ENCODE measurements at regions of chr5 and their contacts with region 1.

Region 1: GRCh38 chr5:38441453-38442246 is 114.8 kb downstream of the LIFR start:
- DNase-seq: peak; percentile 85
- H3K4me3 Mint-ChIP-seq: no peak overlapping the region
- H3K27ac Mint-ChIP-seq: no peak overlapping the region
- H3K4me1 Mint-ChIP-seq: no peaks in the 10 kb centered on the region
- H3K27me3 Mint-ChIP-seq: peaks cover 35% of the 10 kb centered on the region

Region 2: GRCh38 chr5:38373743-38374142 is 67.9 kb before region 1 on chr5:
- CTCF ChIA-PET with region 1: no interaction called
- POLR2A ChIA-PET with region 1: no interaction called
- DNase-seq: no peak
- H3K4me3 Mint-ChIP-seq: no peak overlapping the region
- H3K27ac Mint-ChIP-seq: no peak overlapping the region
- H3K4me1 Mint-ChIP-seq: no peaks in the 10 kb centered on the region
- H3K27me3 Mint-ChIP-seq: peaks cover 5% of the 10 kb centered on the region

Region 3: DNA sequence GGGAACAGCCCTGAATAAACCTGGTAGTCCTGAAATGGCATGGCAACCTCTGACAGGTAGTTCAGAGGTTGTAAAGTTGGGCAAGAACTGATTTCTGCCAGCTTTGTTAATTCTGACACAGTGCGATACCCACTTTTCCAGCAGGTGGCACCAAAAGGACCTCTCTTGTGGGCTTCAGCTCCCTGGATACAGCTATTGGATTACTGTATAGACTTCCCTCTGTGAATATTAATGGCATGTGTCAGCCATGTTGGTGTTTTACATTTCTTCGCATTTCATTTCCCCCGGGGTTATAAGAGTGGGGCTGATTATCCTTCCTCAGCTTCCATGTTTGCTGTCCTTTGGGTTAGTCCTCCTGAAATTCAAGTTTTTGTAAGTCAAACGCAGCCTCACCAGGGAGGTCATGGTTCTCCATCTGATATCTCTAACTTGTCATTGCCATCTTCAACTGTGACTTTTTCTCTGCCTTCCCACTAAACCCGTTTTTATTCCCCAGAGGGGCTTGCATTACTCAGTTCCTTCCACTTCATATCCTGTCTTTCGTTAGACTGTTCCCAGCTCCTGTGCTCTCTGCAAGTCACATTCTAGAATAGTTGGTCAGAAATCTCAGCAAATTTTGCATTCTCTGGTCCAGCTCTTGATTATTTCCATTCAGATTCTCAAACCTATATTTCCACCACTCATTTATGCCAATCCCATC is 20.8 kb before region 1 on chr5:
- CTCF ChIA-PET with region 1: interaction called, 18 read pairs
- POLR2A ChIA-PET with region 1: no interaction called
- DNase-seq: peak; percentile 41
- H3K4me3 Mint-ChIP-seq: no peak overlapping the region
- H3K27ac Mint-ChIP-seq: no peak overlapping the region
- H3K4me1 Mint-ChIP-seq: no peaks in the 10 kb centered on the region
- H3K27me3 Mint-ChIP-seq: peaks cover 33% of the 10 kb centered on the region

Region 4: GRCh38 chr5:38479315-38479904 is 37.8 kb after region 1 on chr5:
- CTCF ChIA-PET with region 1: interaction called, 13 read pairs
- POLR2A ChIA-PET with region 1: no interaction called
- DNase-seq: no peak
- H3K4me3 Mint-ChIP-seq: no peak overlapping the region
- H3K27ac Mint-ChIP-seq: no peak overlapping the region
- H3K4me1 Mint-ChIP-seq: no peaks in the 10 kb centered on the region
- H3K27me3 Mint-ChIP-seq: peaks cover 48% of the 10 kb centered on the region

Region 5: DNA sequence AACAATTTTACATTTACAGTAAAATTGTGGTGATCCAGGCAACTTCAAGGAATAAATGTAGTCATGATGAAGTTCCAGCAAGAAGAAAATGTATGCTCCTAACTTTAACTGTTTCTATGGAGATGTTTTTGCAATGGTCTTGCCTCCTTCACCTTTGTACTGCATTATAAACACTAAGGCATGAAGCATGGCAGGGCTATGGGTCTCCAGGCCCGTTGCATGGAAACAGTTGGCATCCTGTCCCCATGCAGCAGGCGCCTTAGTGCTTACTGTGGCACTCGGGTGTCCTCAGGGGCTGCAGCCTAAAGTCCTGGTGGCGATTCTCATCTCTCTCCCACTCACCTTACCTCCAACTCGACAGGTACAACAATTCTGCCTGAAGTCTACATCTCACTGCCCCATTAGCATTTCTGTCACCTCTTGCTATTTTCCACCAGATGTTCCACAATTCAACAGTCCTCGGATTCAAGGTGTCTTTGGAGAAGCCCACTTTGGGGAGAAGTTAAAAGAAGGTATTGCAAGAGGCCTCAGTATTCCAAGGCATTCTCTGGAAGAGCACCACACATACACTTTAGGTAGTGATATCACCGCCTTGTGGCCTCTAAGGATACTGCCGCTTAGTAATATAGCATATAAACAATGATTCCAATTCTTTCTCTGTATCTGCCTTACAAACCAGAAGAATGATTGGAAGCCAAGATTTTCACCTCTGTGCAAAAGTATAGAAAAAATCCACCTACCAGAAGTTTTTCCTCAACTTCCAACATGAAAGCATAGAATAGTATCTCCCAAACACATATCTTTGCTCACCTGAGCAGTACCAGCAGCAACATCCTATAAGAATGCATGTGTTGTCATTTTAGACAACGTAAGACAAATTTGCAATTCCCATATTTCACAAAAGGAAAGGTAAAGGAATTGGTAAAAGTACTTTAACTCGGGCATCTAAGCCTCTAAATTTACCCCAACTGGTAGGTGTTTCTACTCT is 109.7 kb after region 1 on chr5:
- CTCF ChIA-PET with region 1: interaction called, 32 read pairs
- POLR2A ChIA-PET with region 1: no interaction called
- DNase-seq: no peak
- H3K4me3 Mint-ChIP-seq: no peak overlapping the region
- H3K27ac Mint-ChIP-seq: no peak overlapping the region
- H3K4me1 Mint-ChIP-seq: peaks cover 3% of the 10 kb centered on the region
- H3K27me3 Mint-ChIP-seq: peaks cover 47% of the 10 kb centered on the region

Region 6: DNA sequence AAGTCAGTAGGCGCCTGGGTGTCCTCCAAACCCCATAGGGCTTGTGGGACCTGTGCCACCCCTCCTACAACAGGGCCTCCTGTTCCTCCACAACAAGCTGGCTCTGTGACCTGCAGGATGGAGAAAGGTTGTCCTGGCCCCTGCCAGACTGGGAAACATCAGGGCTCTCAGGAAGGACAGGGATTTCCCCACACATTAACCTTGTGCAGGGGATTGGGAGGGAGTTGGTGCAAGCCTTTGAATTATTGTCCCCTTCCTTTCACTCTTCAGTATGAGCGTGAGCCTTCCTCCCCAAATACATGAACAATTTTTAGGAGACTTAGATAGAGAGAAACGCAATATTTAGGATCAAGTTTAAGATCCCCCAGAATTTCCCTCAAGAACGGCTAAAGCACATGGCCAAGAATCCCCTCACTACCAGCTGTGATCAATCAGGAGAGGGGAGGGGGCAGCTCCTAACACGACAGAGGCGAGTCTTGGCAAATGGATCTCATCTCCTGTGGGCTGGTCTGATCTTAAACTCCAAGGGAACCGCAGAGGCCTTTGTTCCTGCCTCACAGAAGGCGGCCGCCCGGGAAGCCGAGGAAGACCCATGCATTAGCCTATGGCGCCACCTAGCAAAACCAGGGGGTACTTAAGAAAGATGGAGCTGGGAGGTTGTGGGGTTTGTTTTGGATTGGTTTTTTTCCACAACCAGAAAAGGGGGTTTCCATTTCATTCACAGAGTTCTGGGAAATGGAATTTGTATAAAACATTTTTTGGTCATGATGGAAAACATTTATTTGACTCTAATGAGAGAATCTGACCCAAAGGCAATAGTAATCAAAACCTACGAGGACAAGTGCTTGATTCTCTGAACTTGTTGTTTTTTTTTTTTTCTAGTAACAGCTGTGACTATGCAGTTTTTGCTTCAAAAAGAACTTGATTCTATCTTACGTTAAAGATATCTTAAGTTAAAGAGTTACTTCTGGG is 368.0 kb after region 1 on chr5:
- CTCF ChIA-PET with region 1: interaction called, 96 read pairs
- POLR2A ChIA-PET with region 1: interaction called, 6 read pairs
- DNase-seq: peak; percentile 67
- H3K4me3 Mint-ChIP-seq: no peak overlapping the region
- H3K27ac Mint-ChIP-seq: no peak overlapping the region
- H3K4me1 Mint-ChIP-seq: peaks cover 15% of the 10 kb centered on the region
- H3K27me3 Mint-ChIP-seq: peaks cover 13% of the 10 kb centered on the region

Measured in activated CD4-positive, alpha-beta memory T cell treated with anti-CD3 and anti-CD28 coated beads, Interleukin-2, amount 10 ng/mL, durations not matched to agents 7 days and 5 days (primary cell).